Activated CD4-positive, alpha-beta memory T cell treated with anti-CD3 and anti-CD28 coated beads for 36 hours (primary cell): ENCODE measurements at regions of chr17 and their contacts with region 1.

Region 1: GRCh38 chr17:6285486-6285885 is 149.4 kb downstream of the AIPL1 start:
- DNase-seq: no peak
- H3K4me3 Mint-ChIP-seq: no peak overlapping the region
- H3K27ac Mint-ChIP-seq: no peak overlapping the region
- H3K4me1 Mint-ChIP-seq: no peaks in the 10 kb centered on the region
- H3K27me3 Mint-ChIP-seq: peaks cover 10% of the 10 kb centered on the region

Region 2: GRCh38 chr17:6413065-6413464 is 127.6 kb after region 1 on chr17:
- CTCF ChIA-PET with region 1: no interaction called
- POLR2A ChIA-PET with region 1: no interaction called
- intact Hi-C with region 1: loop called (anchors 1 kb)
- DNase-seq: no peak
- H3K4me3 Mint-ChIP-seq: no peak overlapping the region
- H3K27ac Mint-ChIP-seq: no peak overlapping the region
- H3K4me1 Mint-ChIP-seq: no peaks in the 10 kb centered on the region
- H3K27me3 Mint-ChIP-seq: peaks cover 3% of the 10 kb centered on the region